Ascending aorta (tissue), 2 donors: ENCODE measurements at regions of chr3 and their contacts with region 1.

Region 1: GRCh38 chr3:146326670-146327543 is 76.0 kb upstream of the PLSCR4 start:
- DNase-seq: peak in 1 of 2 donors; percentile 74
- H3K4me3 ChIP-seq: no peak overlapping the region
- H3K27ac ChIP-seq: no peak overlapping the region
- H3K4me1 ChIP-seq: peaks cover 0 to 6% of the 10 kb centered on the region in 2 donors
- H3K27me3 ChIP-seq: no peaks in the 10 kb centered on the region
- CTCF ChIP-seq: peak; percentile 60 to 68 (median 66)

Region 2: DNA sequence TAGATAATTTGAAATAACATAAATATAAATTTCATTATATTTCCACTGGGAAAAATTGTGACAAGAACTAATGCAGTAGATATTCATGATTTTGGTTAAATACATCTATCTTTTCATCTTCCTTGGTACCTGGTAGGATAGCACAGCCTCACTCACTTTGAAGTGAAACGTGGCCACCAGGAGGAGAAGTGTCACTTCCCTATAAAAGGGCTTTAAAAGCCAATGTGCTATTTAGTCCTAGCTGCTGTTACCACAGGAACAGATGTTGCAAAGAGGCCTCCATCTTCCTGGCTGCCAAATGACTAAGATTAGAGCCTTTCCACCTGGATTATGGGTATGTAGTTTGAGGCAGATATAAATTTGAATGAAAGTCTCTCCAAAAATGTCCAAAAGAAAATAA is 305.9 kb before region 1 on chr3:
- intact Hi-C with region 1: no loop called
- DNase-seq: no peak
- H3K4me3 ChIP-seq: no peak overlapping the region
- H3K27ac ChIP-seq: no peak overlapping the region
- H3K4me1 ChIP-seq: no peaks in the 10 kb centered on the region
- H3K27me3 ChIP-seq: no peaks in the 10 kb centered on the region
- CTCF ChIP-seq: no peak

Region 3: GRCh38 chr3:146035356-146035755 is 291.6 kb before region 1 on chr3:
- intact Hi-C with region 1: no loop called
- DNase-seq: no peak
- H3K4me3 ChIP-seq: no peak overlapping the region
- H3K27ac ChIP-seq: no peak overlapping the region
- H3K4me1 ChIP-seq: no peaks in the 10 kb centered on the region
- H3K27me3 ChIP-seq: no peaks in the 10 kb centered on the region
- CTCF ChIP-seq: no peak

Region 4: DNA sequence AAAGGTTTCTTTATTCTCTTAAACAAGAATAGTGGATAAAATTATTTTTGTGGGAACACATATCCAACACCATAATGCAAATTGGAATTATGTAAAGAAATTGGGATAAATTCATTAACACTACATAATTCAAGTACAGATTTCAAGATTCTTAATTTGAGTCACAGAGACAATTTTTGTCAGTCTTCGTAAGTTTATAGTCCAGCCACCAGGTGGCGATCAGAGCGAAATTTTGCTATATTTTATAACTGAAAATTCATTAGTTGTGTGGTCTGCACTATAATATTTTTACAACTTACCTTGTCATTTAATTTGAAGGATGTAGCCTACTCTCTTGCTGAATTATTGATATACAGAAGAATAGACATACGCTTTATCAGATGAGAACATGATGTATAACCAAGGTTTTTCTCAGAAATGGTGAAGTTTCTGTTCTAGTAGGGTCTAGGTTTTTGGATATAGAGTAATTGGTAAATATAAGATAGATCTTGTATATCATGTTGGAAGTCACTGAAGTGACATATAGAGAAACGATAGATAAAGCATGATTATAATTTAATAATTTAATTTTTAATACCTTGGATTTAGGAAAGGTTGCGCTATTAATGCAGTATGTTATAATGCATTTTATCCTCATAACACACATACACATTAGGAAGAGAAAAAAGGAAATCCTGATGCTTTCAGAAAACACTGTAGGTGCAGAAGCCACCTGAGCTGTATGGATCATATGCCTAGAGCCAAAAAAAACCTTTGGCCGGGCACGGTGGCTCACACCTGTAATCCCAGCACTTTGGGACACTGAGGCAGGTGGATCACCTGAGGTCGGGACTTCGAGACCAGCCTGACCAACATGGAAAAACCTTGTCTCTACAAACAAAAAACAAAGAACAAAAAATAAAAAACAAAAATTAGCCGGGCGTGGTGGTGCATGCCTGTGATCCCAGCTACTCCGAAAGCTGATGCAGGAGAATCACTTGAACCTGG is 107.7 kb before region 1 on chr3:
- intact Hi-C with region 1: loop called (anchors 1 kb)
- DNase-seq: no peak
- H3K4me3 ChIP-seq: no peak overlapping the region
- H3K27ac ChIP-seq: no peak overlapping the region
- H3K4me1 ChIP-seq: peaks cover 0 to 12% of the 10 kb centered on the region in 2 donors
- H3K27me3 ChIP-seq: no peaks in the 10 kb centered on the region
- CTCF ChIP-seq: peak; percentile 31 to 74 (median 56)

Region 5: GRCh38 chr3:146342989-146343388 is 16.1 kb after region 1 on chr3:
- intact Hi-C with region 1: no loop called
- DNase-seq: no peak
- H3K4me3 ChIP-seq: no peak overlapping the region
- H3K27ac ChIP-seq: no peak overlapping the region
- H3K4me1 ChIP-seq: no peaks in the 10 kb centered on the region
- H3K27me3 ChIP-seq: no peaks in the 10 kb centered on the region
- CTCF ChIP-seq: no peak